ENCODE measurements at regions of chr1 and their contacts with region 1.

Region 1: DNA sequence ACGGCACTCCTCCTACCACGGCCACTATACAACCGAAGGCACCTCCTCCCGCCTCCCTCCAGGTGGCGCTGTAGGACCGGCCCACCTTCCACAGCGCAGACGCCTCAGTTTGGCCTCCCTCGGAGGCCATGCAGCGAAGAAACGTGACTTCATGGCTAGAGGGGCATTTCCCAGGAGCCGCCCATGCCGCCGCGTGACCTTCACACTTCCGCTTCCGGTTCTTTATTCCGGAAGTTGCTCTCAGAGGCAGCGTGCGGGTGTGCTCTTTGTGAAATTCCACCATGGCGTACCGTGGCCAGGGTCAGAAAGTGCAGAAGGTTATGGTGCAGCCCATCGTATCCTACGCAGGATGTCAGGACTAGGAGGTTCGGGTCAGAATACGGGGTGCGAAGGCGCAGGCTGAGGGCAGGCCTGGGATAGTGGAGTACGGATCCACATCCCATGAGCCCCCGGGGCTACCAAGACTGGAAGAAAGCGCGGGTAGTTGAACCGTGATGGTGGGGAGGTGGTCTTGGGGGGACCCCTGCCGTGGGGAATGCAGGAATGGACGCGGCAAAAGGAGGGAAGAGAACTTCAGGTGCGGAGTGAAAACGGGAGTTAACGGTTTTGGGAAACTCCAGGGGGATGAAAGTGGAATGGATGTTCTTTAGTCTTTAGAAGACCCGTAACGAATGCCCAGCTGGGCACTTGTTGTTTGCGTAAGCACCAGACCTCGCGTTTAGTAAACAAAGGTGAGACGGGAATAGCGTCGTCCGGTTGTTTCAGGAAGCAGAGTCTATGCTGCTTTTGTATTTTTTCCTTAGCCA is at the start of gene SNRPE:
- DNase-seq: peak; percentile 96 to 99
- ATAC-seq: peak; percentile 98 to 100 (median 98)
- H3K4me3 ChIP-seq: peak within 1 kb of the TSS; percentile 90
- H3K4me3 Mint-ChIP-seq: peak within 1 kb of the TSS; percentile 100
- H3K27ac ChIP-seq: peak within 1 kb of the TSS; percentile 64
- H3K27ac Mint-ChIP-seq: peak within 1 kb of the TSS; percentile 96 to 100
- H3K4me1 ChIP-seq: peaks cover 11% of the 10 kb centered on the region
- H3K4me1 Mint-ChIP-seq: peaks cover 20 to 25% of the 10 kb centered on the region in 2 donors
- H3K27me3 ChIP-seq: no peaks in the 10 kb centered on the region
- H3K27me3 Mint-ChIP-seq: no peaks in the 10 kb centered on the region
- CTCF ChIP-seq: peak; percentile 86
- total RNA-seq, gene SNRPE: 48.6 to 57.9 (median 54.4) TPM

Region 2: GRCh38 chr1:203795441-203796235 is 65.9 kb before region 1 on chr1 and contains the starts of genes ZBED6 and ZC3H11A:
- intact Hi-C with region 1: loop called (anchors 1 kb)
- DNase-seq: peak; percentile 93 to 99
- ATAC-seq: peak; percentile 96 to 99 (median 98)
- H3K4me3 ChIP-seq: peak within 1 kb of the TSS; percentile 70
- H3K4me3 Mint-ChIP-seq: peak within 1 kb of the TSS; percentile 98
- H3K27ac ChIP-seq: peak within 1 kb of the TSS; percentile 87
- H3K27ac Mint-ChIP-seq: peak within 1 kb of the TSS; percentile 97 to 98
- H3K4me1 ChIP-seq: peaks cover 8% of the 10 kb centered on the region
- H3K4me1 Mint-ChIP-seq: peaks cover 45 to 49% of the 10 kb centered on the region in 2 donors
- H3K27me3 ChIP-seq: no peaks in the 10 kb centered on the region
- H3K27me3 Mint-ChIP-seq: no peaks in the 10 kb centered on the region
- CTCF ChIP-seq: no peak
- total RNA-seq, gene ZBED6: 36.4 to 41.3 (median 39.8) TPM
- total RNA-seq, gene ZC3H11A: 71.1 to 79.9 (median 78.2) TPM

Region 3: GRCh38 chr1:204128964-204129896 is 267.6 kb after region 1 on chr1:
- intact Hi-C with region 1: loop called (anchors 1 kb)
- DNase-seq: peak; percentile 65 to 84
- ATAC-seq: peak; percentile 78 to 98 (median 94)
- H3K4me3 ChIP-seq: no peak overlapping the region
- H3K4me3 Mint-ChIP-seq: no peak overlapping the region
- H3K27ac ChIP-seq: no peak overlapping the region
- H3K27ac Mint-ChIP-seq: peak overlapping the region; percentile 57 to 84
- H3K4me1 ChIP-seq: peaks cover 7% of the 10 kb centered on the region
- H3K4me1 Mint-ChIP-seq: peaks cover 12 to 13% of the 10 kb centered on the region in 2 donors
- H3K27me3 ChIP-seq: no peaks in the 10 kb centered on the region
- H3K27me3 Mint-ChIP-seq: no peaks in the 10 kb centered on the region
- CTCF ChIP-seq: peak; percentile 91

Region 4: GRCh38 chr1:204207136-204207616 is 345.6 kb after region 1 on chr1:
- intact Hi-C with region 1: loop called (anchors 1 kb)
- DNase-seq: peak; percentile 71 to 80
- ATAC-seq: peak; percentile 84 to 98 (median 95)
- H3K4me3 ChIP-seq: no peak overlapping the region
- H3K4me3 Mint-ChIP-seq: no peak overlapping the region
- H3K27ac ChIP-seq: no peak overlapping the region
- H3K27ac Mint-ChIP-seq: no peak overlapping the region
- H3K4me1 ChIP-seq: peaks cover 4% of the 10 kb centered on the region
- H3K4me1 Mint-ChIP-seq: no peaks in the 10 kb centered on the region
- H3K27me3 ChIP-seq: peaks cover 2% of the 10 kb centered on the region
- H3K27me3 Mint-ChIP-seq: peaks cover 30 to 48% of the 10 kb centered on the region in 2 donors
- CTCF ChIP-seq: peak; percentile 94

Region 5: GRCh38 chr1:204363335-204364124 is 501.9 kb after region 1 on chr1:
- intact Hi-C with region 1: loop called (anchors 1 kb)
- DNase-seq: peak; percentile 55 to 91
- ATAC-seq: peak; percentile 91 to 98 (median 96)
- H3K4me3 ChIP-seq: peak overlapping the region; percentile 43
- H3K4me3 Mint-ChIP-seq: peak overlapping the region; percentile 61
- H3K27ac ChIP-seq: no peak overlapping the region
- H3K27ac Mint-ChIP-seq: peak overlapping the region in 1 of 2 donors; percentile 60
- H3K4me1 ChIP-seq: peaks cover 14% of the 10 kb centered on the region
- H3K4me1 Mint-ChIP-seq: peaks cover 8 to 13% of the 10 kb centered on the region in 2 donors
- H3K27me3 ChIP-seq: peaks cover 3% of the 10 kb centered on the region
- H3K27me3 Mint-ChIP-seq: peaks cover 0 to 7% of the 10 kb centered on the region in 2 donors
- CTCF ChIP-seq: peak; percentile 89